HepG2 (cell line): ENCODE measurements at regions of chr2 and their contacts with region 1.

Region 1: DNA sequence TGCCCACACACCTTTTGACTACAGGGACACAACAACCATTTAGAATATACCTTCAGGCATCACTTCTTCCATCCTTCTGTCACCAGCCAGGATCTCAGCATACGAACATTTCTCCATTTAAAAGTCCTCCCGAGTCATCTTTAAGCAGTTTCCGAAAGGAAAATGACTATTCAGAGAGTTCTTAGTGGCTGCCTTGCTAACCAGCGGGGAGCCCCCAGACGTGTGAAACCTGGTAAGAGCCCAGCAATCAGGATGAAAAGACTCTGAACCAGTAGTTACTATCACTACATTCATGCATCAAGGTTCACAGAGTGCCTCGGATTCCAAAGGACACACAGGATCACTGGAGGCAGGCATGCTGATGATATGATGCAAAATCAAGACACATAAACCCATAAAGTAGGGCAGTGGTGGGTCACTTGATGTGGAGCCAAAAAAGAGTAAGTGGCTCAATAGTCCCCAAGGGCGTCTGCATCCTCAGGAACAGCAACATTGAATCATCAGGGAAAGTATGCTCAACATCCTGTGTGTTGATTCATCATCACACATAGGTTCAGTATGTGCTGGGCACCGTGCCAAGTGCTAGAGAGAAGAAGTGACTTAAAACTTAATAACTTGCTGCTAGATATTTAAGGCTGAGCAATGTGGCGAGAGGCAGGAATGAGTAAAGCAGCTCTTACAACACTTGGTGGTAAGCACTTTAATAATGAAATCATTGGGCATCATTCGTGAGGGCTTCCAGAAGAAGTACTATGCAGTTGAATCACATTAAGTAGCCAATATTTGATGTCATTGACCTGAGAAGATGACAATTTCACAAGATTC is 4.4 kb downstream of the CCL20 start:
- DNase-seq: peak; percentile 95
- ATAC-seq: peak; percentile 11
- H3K4me3 ChIP-seq: peak overlapping the region; percentile 22 to 92 (median 26); a peak in 5 of 6 replicates
- H3K27ac ChIP-seq: peak overlapping the region; percentile 94
- H3K4me1 ChIP-seq: peaks cover 76% of the 10 kb centered on the region
- H3K27me3 ChIP-seq: no peaks in the 10 kb centered on the region; a peak in 1 of 5 replicates
- CTCF ChIP-seq: no peak
- EP300 ChIP-seq: peak in 1 of 2 experiments; percentile 34; a peak in 2 of 4 replicates
- POLR2A ChIP-seq: peak; percentile 67 to 82
- RAD21 ChIP-seq: no peak; the same call in 1 of the 2 replicates

Region 2: GRCh38 chr2:227406177-227407031 is 411.7 kb before region 1 on chr2:
- CTCF ChIA-PET with region 1: no interaction called
- POLR2A ChIA-PET with region 1: interaction called, 5 read pairs
- in situ Hi-C with region 1: no loop called
- intact Hi-C with region 1: loop called (anchors 1 kb)
- DNase-seq: peak; percentile 99
- ATAC-seq: peak; percentile 93
- H3K4me3 ChIP-seq: peak overlapping the region in 2 of 3 experiments; percentile 2 to 24; a peak in 1 of 6 replicates
- H3K27ac ChIP-seq: peak overlapping the region; percentile 51
- H3K4me1 ChIP-seq: peaks cover 20% of the 10 kb centered on the region
- H3K27me3 ChIP-seq: peaks cover 0 to 4% of the 10 kb centered on the region in 2 experiments; a peak in 1 of 5 replicates
- CTCF ChIP-seq: peak; percentile 98
- EP300 ChIP-seq: peak in 1 of 2 experiments; percentile 82; a peak in 2 of 4 replicates
- POLR2A ChIP-seq: peak in 1 of 2 experiments; percentile 29; a peak in 1 of 4 replicates
- RAD21 ChIP-seq: peak; percentile 97

Region 3: GRCh38 chr2:227471924-227472264 is 346.2 kb before region 1 on chr2 and contains the start of gene AGFG1:
- CTCF ChIA-PET with region 1: no interaction called
- POLR2A ChIA-PET with region 1: no interaction called
- in situ Hi-C with region 1: no loop called
- intact Hi-C with region 1: loop called (anchors 5 kb)
- DNase-seq: peak; percentile 76
- ATAC-seq: peak; percentile 81
- H3K4me3 ChIP-seq: peak within 1 kb of the TSS; percentile 94 to 98 (median 97)
- H3K27ac ChIP-seq: peak within 1 kb of the TSS; percentile 81
- H3K4me1 ChIP-seq: peaks cover 56% of the 10 kb centered on the region
- H3K27me3 ChIP-seq: no peaks in the 10 kb centered on the region; a peak in 1 of 5 replicates
- CTCF ChIP-seq: peak; percentile 95
- EP300 ChIP-seq: 0 out of 4 replicates have a peak, but pooled peaks of 1 of the 2 experiments have one; percentile 24
- POLR2A ChIP-seq: peak; percentile 63 to 76; a peak in 3 of 4 replicates
- RAD21 ChIP-seq: peak; percentile 83
- total RNA-seq, gene AGFG1: 145 and 187 TPM in 2 replicates

Region 4: DNA sequence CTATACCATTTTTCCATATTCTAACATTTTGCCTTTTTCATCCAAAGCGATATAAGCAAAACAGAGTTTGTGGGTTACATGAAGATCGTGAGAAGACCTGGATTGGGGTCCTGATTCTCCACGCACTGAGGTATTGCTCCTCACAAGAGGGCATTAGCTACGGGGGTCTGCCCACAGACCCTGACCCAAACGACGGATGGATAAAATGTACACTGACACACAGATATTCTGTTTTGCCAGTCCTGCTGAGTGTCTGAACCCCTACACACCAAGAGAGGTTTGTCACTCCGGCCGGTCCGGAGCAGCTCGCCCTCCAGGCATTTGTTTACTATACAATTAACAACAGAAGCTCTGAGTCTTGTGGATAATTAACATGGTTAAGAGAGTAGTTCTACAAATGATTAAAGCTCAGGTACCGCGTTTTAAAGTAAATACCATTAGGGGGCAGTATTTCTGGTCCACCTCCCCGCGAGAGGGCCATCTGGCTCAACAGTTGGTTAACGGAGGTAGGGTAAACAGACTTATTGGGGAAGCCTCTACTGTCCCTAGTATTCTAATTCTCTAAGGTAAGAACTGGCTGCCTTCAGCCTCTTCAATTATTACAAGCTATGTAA is 43.9 kb before region 1 on chr2:
- CTCF ChIA-PET with region 1: no interaction called
- POLR2A ChIA-PET with region 1: interaction called, 10 read pairs
- in situ Hi-C with region 1: no loop called
- intact Hi-C with region 1: loop called (anchors 1 kb)
- DNase-seq: peak; percentile 69
- ATAC-seq: peak; percentile 96
- H3K4me3 ChIP-seq: peak overlapping the region in 2 of 3 experiments; percentile 37 to 47; a peak in 3 of 6 replicates
- H3K27ac ChIP-seq: no peak overlapping the region
- H3K4me1 ChIP-seq: peaks cover 59% of the 10 kb centered on the region
- H3K27me3 ChIP-seq: peaks cover 0 to 2% of the 10 kb centered on the region in 2 experiments; a peak in 1 of 5 replicates
- CTCF ChIP-seq: peak; percentile 76
- EP300 ChIP-seq: no peak
- POLR2A ChIP-seq: no peak
- RAD21 ChIP-seq: peak; percentile 71; the same call in 1 of the 2 replicates

Region 5: DNA sequence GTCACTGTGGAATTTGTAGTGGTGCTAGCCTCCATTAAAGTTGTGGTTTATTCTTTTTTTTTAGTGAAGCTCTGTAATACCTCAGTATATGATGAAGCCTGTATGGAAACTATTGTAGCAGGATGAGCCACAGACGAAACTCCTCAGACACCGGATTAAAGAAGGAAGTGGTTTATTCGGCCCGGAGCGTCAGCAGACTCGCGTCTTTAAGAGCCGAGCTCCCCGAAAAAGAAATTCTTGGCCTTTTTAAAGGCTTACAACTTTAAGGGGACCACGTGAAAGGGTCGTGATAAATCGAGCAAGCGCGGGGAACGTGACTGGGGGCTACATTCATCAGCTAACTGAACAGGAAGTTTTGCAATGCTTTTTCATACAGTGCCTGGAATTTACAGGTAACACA is 12.5 kb before region 1 on chr2:
- CTCF ChIA-PET with region 1: no interaction called
- POLR2A ChIA-PET with region 1: interaction called, 21 read pairs
- in situ Hi-C with region 1: no loop called
- intact Hi-C with region 1: no loop called
- DNase-seq: no peak
- ATAC-seq: no peak
- H3K4me3 ChIP-seq: no peak overlapping the region
- H3K27ac ChIP-seq: no peak overlapping the region
- H3K4me1 ChIP-seq: peaks cover 7% of the 10 kb centered on the region; the same call in 1 of the 2 replicates
- H3K27me3 ChIP-seq: no peaks in the 10 kb centered on the region
- CTCF ChIP-seq: no peak
- EP300 ChIP-seq: no peak
- POLR2A ChIP-seq: no peak
- RAD21 ChIP-seq: no peak

Region 6: DNA sequence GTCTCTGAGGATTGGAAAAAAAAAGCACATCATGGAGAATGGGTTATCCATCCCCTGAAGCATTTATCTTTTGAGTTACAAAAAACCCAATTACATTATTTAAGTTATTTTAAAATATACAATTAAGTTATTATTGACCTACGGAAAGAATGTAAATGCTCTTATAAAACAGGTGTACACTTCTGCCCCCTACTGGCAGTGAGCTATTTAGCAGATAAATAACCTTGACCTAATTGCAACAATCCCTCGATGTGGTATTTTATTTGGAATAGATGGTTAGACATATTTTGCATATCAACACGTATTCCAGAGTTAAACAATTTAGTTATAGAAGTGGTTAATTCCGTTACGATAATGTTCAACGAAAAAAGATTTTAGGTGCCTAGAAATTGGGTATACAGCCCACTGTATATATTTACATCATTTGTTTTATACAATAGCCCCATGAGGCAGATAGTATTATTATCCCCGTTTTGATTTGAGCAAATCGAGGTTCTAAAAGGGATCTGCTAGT is 44.2 kb after region 1 on chr2:
- CTCF ChIA-PET with region 1: interaction called, 9 read pairs
- POLR2A ChIA-PET with region 1: interaction called, 18 read pairs
- in situ Hi-C with region 1: no loop called
- intact Hi-C with region 1: loop called (anchors 1 kb)
- DNase-seq: peak; percentile 65
- ATAC-seq: no peak
- H3K4me3 ChIP-seq: peak overlapping the region in 1 of 3 experiments; percentile 27; a peak in 2 of 6 replicates
- H3K27ac ChIP-seq: no peak overlapping the region
- H3K4me1 ChIP-seq: peaks cover 33% of the 10 kb centered on the region
- H3K27me3 ChIP-seq: peaks cover 4 to 30% of the 10 kb centered on the region in 2 experiments; a peak in 4 of 5 replicates
- CTCF ChIP-seq: peak; percentile 74
- EP300 ChIP-seq: no peak
- POLR2A ChIP-seq: no peak
- RAD21 ChIP-seq: peak; percentile 31; the same call in 1 of the 2 replicates

Region 7: DNA sequence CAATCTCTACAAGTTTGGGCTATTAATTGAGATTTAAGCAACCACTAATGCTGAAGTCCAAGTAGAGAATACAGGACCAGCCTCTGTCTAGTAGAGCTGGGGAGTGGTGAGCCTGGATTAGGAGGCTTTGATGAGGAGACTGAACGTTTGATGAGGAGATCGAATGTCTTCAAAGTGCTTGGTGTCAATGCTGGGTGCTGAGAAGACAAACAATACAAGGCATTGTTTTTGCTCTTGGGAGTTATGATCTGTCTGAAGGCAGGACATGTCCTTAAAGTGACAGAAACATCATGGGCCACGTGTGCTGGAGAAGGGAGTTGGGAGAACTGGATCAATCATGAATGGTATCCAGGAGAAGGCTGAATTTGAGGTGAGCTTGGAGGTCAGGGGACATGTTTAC is 219.9 kb after region 1 on chr2:
- CTCF ChIA-PET with region 1: no interaction called
- POLR2A ChIA-PET with region 1: no interaction called
- in situ Hi-C with region 1: no loop called
- intact Hi-C with region 1: no loop called
- DNase-seq: no peak
- ATAC-seq: no peak
- H3K4me3 ChIP-seq: no peak overlapping the region
- H3K27ac ChIP-seq: no peak overlapping the region
- H3K4me1 ChIP-seq: no peaks in the 10 kb centered on the region
- H3K27me3 ChIP-seq: no peaks in the 10 kb centered on the region
- CTCF ChIP-seq: no peak
- EP300 ChIP-seq: no peak
- POLR2A ChIP-seq: no peak
- RAD21 ChIP-seq: no peak